OCI-LY7 (cell line): ENCODE measurements at regions of chr12 and their contacts with region 1.

Region 1: GRCh38 chr12:32302218-32303173 is 96.9 kb upstream of the FGD4 start:
- DNase-seq: peak; percentile 89
- H3K4me3 ChIP-seq: peak overlapping the region; percentile 36
- H3K27ac ChIP-seq: peak overlapping the region; percentile 94
- H3K4me1 ChIP-seq: peaks cover 71% of the 10 kb centered on the region
- CTCF ChIP-seq: peak; percentile 93

Region 2: GRCh38 chr12:31659087-31659933 is 643.2 kb before region 1 on chr12 and contains the start of gene ETFBKMT:
- CTCF ChIA-PET with region 1: no interaction called
- POLR2A ChIA-PET with region 1: no interaction called
- intact Hi-C with region 1: loop called (anchors 2 kb)
- DNase-seq: peak; percentile 99
- H3K4me3 ChIP-seq: peak within 1 kb of the TSS; percentile 86
- H3K27ac ChIP-seq: peak within 1 kb of the TSS; percentile 86
- H3K4me1 ChIP-seq: peaks cover 20% of the 10 kb centered on the region
- CTCF ChIP-seq: peak; percentile 65
- total RNA-seq, gene ETFBKMT: 0.54 and 0.92 TPM in 2 replicates

Region 3: DNA sequence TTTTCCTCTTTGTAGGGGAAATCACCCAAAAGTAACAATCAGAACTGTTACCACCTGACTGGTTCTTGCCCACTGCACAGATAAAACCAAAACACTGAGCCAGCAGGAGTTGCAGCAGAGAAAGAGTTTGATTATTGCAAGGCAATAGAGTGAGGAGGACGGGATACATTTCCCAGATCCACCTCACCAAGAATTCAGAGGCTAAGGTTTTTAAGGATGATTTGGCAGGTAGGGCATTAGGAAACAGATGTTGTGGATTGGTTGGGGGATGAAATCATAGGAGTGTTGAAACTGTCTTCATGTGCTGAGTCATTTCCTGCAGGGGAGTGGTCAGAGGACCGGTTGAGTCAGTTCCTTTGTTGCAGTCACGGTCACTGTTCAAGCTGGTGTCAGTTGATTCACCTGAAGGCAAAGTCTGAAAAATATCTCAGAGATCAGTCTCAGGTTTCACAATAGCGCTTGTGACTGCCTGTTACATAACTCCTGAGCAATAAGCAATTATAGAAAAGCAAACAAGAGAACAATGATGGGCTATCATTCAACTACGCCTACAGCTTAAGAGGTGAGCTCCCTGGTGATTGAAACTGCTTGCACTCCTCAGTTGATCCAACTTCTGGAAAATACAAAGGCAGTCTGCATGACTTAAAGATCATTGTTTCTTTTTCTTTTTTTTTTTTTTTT is 553.3 kb before region 1 on chr12:
- CTCF ChIA-PET with region 1: no interaction called
- POLR2A ChIA-PET with region 1: no interaction called
- intact Hi-C with region 1: loop called (anchors 10 kb)
- DNase-seq: peak; percentile 79
- H3K4me3 ChIP-seq: peak overlapping the region; percentile 2
- H3K27ac ChIP-seq: peak overlapping the region; percentile 74
- H3K4me1 ChIP-seq: peaks cover 83% of the 10 kb centered on the region
- CTCF ChIP-seq: no peak

Region 4: DNA sequence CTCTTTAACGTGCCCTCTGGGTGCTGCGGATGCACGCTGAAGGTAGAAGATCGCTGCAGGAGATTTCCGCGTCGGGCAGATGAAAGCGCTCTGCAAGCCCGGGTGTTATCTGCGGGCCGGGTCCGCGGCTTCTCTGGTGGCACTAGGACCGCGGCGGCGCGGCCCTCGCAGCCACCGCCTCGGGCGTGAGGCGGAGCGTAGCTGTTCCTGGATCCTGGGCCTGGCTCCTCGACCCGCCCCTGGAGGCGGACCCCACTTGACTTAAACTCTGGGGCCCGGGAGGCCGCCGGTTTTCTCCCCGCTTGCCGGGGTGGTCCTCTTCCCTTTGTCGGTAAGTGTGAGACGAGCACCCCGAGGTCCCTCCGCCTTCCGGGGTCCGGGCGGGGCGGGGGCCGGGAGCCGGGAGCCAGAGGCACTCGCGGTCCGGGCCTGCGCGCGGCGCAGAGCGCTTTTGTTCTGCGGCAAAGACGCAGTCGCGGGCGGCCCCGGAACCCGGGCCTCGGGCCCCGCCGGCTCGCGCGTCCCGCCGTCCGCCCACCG is 343.3 kb before region 1 on chr12 and contains the start of gene RESF1:
- CTCF ChIA-PET with region 1: no interaction called
- POLR2A ChIA-PET with region 1: no interaction called
- intact Hi-C with region 1: loop called (anchors 2 kb)
- DNase-seq: peak; percentile 97
- H3K4me3 ChIP-seq: peak within 1 kb of the TSS; percentile 78
- H3K27ac ChIP-seq: peak within 1 kb of the TSS; percentile 87
- H3K4me1 ChIP-seq: peaks cover 28% of the 10 kb centered on the region
- CTCF ChIP-seq: no peak
- total RNA-seq, gene RESF1: 53.3 and 70.4 TPM in 2 replicates

Region 5: DNA sequence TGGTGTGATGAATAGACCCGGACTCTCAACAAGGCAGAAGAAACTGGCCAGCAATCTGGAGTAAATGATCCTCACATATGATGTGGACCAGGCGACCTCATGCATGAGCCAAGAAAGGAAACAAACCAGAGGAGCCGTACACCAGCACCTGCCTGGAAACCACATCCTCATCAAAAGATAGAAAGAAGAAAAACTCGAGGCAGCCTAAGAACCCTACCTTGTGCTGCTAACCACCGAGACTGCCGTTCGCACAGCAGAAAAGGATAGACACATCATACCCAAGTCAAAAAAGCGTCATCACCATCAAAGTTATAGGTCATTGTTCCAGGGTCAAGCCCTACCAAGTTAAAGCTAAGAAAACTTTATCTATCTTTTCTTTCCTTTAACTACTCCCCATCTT is 276.6 kb before region 1 on chr12:
- CTCF ChIA-PET with region 1: no interaction called
- POLR2A ChIA-PET with region 1: no interaction called
- intact Hi-C with region 1: no loop called
- DNase-seq: peak; percentile 82
- H3K4me3 ChIP-seq: no peak overlapping the region
- H3K27ac ChIP-seq: no peak overlapping the region
- H3K4me1 ChIP-seq: peaks cover 32% of the 10 kb centered on the region
- CTCF ChIP-seq: no peak

Region 6: DNA sequence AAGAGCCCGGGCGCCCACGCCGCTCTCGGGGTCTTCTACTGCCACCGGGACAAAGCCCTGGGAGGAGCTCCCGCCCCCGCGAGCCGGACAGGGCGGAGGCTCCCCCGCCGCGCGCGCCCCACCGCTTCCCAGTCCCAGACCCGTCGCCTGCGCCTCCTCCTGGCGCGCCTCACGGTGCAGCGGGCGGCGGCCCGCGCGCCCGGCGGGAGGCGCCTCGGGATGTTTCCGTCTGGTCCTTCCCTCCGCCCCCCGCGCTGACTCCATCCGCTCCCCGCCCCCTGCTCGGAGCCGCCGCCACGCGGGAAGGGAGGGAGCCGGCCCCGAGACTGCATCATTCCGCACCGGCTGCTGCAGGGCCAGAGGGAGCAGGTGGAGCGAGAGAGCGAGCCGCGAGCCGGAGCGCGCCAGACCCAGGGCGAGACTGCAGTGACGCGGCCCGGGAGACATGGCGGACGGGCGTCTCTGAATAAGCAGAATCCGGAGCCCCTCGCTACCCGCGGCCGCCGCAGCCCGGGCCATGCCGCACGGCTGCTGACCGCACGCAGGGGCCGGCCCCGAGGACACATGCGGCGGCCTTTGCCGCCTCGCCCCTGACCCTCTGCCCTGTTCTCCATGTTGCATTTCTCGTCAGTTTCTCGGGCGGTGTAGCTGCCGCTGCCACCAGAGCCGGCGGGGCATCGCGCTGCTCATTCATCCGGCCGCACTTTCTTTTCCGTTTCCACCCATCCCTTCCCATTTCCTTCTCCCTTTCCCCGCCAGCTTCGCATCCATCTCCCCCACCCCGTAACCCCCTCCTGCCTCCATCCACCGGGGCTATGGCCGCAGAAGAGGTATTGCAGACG is 195.8 kb before region 1 on chr12 and contains the start of gene BICD1:
- CTCF ChIA-PET with region 1: no interaction called
- POLR2A ChIA-PET with region 1: interaction called, 4 read pairs
- intact Hi-C with region 1: loop called (anchors 1 kb)
- DNase-seq: peak; percentile 84
- H3K4me3 ChIP-seq: peak within 1 kb of the TSS; percentile 97
- H3K27ac ChIP-seq: peak within 1 kb of the TSS; percentile 66
- H3K4me1 ChIP-seq: peaks cover 25% of the 10 kb centered on the region
- CTCF ChIP-seq: peak; percentile 60
- total RNA-seq, gene BICD1: 40.4 and 42.9 TPM in 2 replicates

Region 7: DNA sequence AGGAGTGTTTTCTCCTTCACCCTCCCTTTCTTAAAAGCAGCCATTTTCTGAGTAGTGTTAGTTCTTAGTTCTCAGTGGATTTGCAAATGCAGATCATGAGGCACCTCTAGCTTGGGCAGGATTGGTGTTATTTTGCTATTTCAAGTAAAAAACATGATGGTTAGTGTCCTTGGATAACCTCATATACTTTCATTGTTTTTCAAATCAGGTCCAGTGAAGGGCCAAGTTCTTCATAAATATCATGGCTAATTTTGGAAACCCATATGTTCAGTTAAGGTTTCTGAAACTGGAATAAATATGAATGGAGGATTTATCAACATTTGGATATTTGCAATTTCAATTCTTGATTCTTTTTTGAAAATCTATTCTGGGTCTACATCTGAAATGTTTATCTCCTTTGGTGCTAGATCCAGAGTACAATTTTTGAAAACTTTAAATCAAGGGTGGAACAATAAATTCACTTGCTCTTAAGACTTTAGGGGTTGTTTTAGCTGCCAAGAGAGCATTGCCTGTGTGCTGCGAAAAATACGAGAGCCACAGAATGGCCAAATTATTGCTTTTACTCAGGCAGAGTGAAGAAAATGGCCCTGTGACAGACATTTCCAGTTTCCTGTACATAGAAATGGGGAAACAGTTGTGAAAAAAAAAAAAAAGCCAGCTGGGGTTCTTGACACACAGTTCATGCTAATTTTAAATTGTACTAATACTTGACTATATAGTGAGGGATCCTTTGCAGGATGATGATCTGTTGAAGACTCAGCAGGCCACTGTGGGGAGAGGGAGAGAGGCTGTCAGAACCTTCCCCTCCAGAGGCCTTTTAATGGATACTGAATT is 91.2 kb before region 1 on chr12:
- CTCF ChIA-PET with region 1: no interaction called
- POLR2A ChIA-PET with region 1: no interaction called
- intact Hi-C with region 1: loop called (anchors 5 kb)
- DNase-seq: peak; percentile 22
- H3K4me3 ChIP-seq: no peak overlapping the region
- H3K27ac ChIP-seq: peak overlapping the region; percentile 35
- H3K4me1 ChIP-seq: peaks cover 57% of the 10 kb centered on the region
- CTCF ChIP-seq: no peak

Region 8: GRCh38 chr12:32273712-32274111 is 28.8 kb before region 1 on chr12:
- CTCF ChIA-PET with region 1: no interaction called
- POLR2A ChIA-PET with region 1: interaction called, 31 read pairs
- intact Hi-C with region 1: loop called (anchors 1 kb)
- DNase-seq: peak; percentile 92
- H3K4me3 ChIP-seq: peak overlapping the region; percentile 50
- H3K27ac ChIP-seq: peak overlapping the region; percentile 97
- H3K4me1 ChIP-seq: peaks cover 65% of the 10 kb centered on the region
- CTCF ChIP-seq: no peak

Region 9: DNA sequence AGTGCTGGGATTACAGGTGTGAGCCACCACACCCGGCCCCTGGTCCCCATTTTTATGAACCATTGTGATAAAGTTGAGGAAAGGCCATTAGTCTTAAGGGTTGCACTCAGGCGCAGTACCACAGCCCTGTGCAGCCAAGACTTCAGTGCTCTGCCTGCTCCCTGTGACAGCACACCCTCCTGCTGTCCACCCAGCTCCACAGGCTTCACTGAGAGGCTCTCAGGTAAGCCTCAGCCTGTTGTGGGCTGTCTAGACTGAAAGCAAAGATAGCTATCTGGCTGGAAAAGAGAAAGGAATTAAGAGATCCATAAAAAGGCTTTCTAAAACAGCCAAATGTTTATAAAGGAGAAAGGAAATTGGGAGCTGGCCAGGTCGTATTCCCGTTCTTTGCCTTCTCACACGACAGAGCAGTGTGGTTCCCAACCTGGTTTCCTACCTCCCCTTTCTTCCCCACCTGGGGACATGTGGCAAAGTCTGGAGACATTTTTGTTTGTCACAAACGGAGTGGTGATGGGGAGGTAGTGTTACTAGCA is 357.5 kb after region 1 on chr12:
- CTCF ChIA-PET with region 1: no interaction called
- POLR2A ChIA-PET with region 1: no interaction called
- intact Hi-C with region 1: no loop called
- DNase-seq: no peak
- H3K4me3 ChIP-seq: no peak overlapping the region
- H3K27ac ChIP-seq: no peak overlapping the region
- H3K4me1 ChIP-seq: peaks cover 6% of the 10 kb centered on the region
- CTCF ChIP-seq: no peak